ENCODE measurements at regions of chr3 and their contacts with region 1.

Region 1: DNA sequence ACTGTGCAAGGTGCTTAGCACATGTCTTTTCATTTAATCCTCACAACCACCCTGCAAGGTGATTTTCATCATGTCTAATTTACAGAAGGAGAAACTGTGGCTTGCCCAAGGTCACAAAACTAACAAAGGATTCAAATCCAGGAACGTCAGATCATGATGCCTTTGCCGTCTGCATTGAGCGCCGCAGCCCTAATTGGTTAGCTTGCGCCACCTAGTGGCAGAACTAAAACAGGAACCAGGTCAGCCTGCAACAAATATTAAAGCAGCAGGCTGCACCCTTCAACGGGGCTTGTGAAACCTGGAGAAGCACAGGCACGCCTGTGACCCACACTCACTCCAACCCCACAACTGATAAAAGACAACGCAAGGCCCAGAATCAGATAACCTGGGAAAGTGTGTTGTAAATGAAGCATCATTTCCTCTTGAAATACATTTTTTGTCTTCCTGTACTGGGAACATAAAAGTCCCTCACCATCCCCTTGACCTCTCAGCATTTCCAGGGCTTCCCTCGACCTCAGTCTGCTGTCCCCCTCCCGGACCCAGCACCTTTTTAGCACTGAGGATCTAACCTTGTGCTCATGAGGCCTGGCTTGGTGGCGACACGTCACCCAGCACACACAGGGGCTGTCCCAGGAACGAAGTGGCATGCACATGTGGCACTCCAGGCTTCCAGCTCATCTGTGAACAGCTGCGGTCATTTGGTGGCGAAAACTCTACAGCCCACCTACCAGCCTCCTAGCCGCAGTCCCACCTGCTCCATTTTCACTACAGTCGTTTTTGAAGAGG is 17.3 kb downstream of the DPH3 start:
- DNase-seq: peak; percentile 82
- H3K4me3 ChIP-seq: no peak overlapping the region
- H3K27ac ChIP-seq: no peak overlapping the region
- H3K4me1 ChIP-seq: peaks cover 0 to 8% (median 0%) of the 10 kb centered on the region in 4 donors
- H3K27me3 ChIP-seq: no peaks in the 10 kb centered on the region
- CTCF ChIP-seq: peak; percentile 83 to 97 (median 94)
- EP300 ChIP-seq: no peak
- POLR2A ChIP-seq: no peak

Region 2: DNA sequence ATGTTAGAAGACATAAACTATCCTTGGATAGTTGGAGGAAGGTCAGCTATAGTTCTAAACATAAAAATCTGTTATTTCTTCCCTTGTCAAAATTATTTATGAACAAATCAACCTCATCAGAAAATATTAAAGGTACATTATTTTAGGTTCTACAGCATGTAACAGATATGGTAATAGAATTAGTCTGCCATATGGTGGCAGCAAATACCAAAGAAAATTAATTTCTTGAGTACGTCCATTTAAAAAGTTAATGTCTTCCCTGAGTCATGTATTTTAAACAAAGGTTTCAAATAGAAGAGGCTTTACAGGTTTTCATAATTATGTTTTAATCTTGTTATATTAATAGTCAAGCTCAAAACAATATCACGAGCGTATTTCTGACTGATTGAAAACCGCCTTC is 431.8 kb before region 1 on chr3:
- in situ Hi-C with region 1: loop called in 3 of 4 experiments (anchors 10 to 25 kb)
- intact Hi-C with region 1: loop called (anchors 2 kb)
- DNase-seq: no peak
- H3K4me3 ChIP-seq: no peak overlapping the region
- H3K27ac ChIP-seq: no peak overlapping the region
- H3K4me1 ChIP-seq: peaks cover 0 to 24% (median 8%) of the 10 kb centered on the region in 4 donors
- H3K27me3 ChIP-seq: no peaks in the 10 kb centered on the region
- CTCF ChIP-seq: peak in 4 of 5 experiments; percentile 18 to 27 (median 22)
- EP300 ChIP-seq: no peak
- POLR2A ChIP-seq: no peak

Region 3: GRCh38 chr3:15820911-15821310 is 426.6 kb before region 1 on chr3:
- in situ Hi-C with region 1: loop called in 3 of 4 experiments (anchors 10 to 25 kb)
- intact Hi-C with region 1: no loop called
- DNase-seq: no peak
- H3K4me3 ChIP-seq: no peak overlapping the region
- H3K27ac ChIP-seq: no peak overlapping the region
- H3K4me1 ChIP-seq: peaks cover 0 to 8% (median 0%) of the 10 kb centered on the region in 4 donors
- H3K27me3 ChIP-seq: no peaks in the 10 kb centered on the region
- CTCF ChIP-seq: no peak
- EP300 ChIP-seq: no peak
- POLR2A ChIP-seq: no peak

Region 4: DNA sequence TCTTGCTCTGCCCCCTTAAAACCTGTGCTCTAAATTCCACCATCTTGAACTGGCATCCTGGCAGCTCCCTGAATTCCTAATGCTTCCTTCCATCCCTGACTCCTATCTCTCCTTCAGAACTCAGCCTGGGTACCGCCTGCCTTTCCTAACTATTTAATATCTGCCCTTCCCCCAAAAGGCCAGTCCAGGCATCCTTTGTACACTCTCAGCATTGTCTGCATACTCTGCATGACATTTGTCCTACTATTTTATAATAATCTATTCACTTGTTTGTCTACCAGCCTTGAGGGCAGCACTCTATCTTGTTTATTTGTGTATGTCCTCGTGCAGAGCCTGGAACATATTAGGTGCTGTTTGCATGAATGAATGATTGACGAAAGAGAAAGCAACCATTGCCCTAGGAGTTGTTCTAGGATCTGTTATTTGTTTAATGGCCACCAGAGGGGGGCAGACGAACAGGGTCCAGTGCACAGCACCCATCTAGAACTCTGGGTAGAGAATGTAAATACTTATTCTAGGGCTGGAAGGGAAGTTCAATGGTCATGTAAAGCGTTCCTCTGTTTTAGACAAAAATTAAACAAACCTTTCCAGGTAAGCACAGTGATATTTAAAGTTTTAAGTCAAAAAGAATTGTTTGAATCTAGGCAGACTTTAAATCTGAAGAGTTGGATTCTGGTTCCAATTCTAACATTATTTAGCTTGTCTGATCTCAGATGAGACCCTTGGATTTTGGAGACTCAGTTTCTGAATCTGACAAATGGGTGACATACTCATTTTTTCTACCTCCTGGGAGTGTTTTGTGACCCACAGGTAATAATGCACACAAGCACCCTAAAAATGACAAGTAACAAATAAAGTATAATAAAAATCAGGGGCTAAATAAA is 198.8 kb before region 1 on chr3:
- in situ Hi-C with region 1: loop called in 3 of 4 experiments (anchors 10 kb)
- intact Hi-C with region 1: loop called (anchors 5 kb)
- DNase-seq: peak; percentile 50
- H3K4me3 ChIP-seq: peak overlapping the region in 1 of 4 donors; percentile 25
- H3K27ac ChIP-seq: no peak overlapping the region
- H3K4me1 ChIP-seq: no peaks in the 10 kb centered on the region
- H3K27me3 ChIP-seq: no peaks in the 10 kb centered on the region
- CTCF ChIP-seq: peak; percentile 74 to 88 (median 81)
- EP300 ChIP-seq: no peak
- POLR2A ChIP-seq: no peak

Region 5: GRCh38 chr3:16060358-16060852 is 187.1 kb before region 1 on chr3:
- in situ Hi-C with region 1: loop called in 1 of 4 experiments (anchors 10 kb)
- intact Hi-C with region 1: no loop called
- DNase-seq: peak; percentile 30
- H3K4me3 ChIP-seq: no peak overlapping the region
- H3K27ac ChIP-seq: peak overlapping the region; percentile 54 to 76 (median 65)
- H3K4me1 ChIP-seq: peaks cover 0 to 12% (median 6%) of the 10 kb centered on the region in 4 donors
- H3K27me3 ChIP-seq: no peaks in the 10 kb centered on the region
- CTCF ChIP-seq: no peak
- EP300 ChIP-seq: peak; percentile 70
- POLR2A ChIP-seq: no peak

Region 6: DNA sequence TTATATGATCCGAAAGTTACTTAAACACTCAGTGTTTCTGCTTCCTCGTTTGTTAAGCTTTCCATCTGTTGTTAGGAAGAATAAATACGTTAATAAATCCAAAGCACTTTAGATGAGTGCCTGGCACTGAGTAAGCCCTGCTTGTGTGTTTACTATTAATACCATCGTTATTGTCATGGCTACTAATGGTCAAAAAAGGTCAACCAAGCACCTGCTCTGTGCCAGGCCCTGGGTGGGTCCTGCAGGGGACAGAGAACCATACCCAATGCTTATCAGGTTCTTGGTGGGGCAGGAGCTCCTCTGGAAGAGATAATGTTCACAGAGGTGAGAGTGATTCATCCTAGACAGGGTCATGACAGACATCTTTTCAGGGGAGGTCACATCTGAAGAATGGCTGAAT is 33.1 kb before region 1 on chr3:
- in situ Hi-C with region 1: no loop called
- intact Hi-C with region 1: loop called (anchors 1 kb)
- DNase-seq: no peak
- H3K4me3 ChIP-seq: no peak overlapping the region
- H3K27ac ChIP-seq: no peak overlapping the region
- H3K4me1 ChIP-seq: no peaks in the 10 kb centered on the region
- H3K27me3 ChIP-seq: no peaks in the 10 kb centered on the region
- CTCF ChIP-seq: no peak
- EP300 ChIP-seq: no peak
- POLR2A ChIP-seq: no peak

Region 7: GRCh38 chr3:16388850-16389441 is 141.5 kb after region 1 on chr3:
- in situ Hi-C with region 1: no loop called
- intact Hi-C with region 1: no loop called
- DNase-seq: no peak
- H3K4me3 ChIP-seq: no peak overlapping the region
- H3K27ac ChIP-seq: peak overlapping the region; percentile 7 to 25 (median 9)
- H3K4me1 ChIP-seq: no peaks in the 10 kb centered on the region
- H3K27me3 ChIP-seq: no peaks in the 10 kb centered on the region
- CTCF ChIP-seq: no peak
- EP300 ChIP-seq: no peak
- POLR2A ChIP-seq: no peak

Region 8: GRCh38 chr3:16504242-16504641 is 256.8 kb after region 1 on chr3:
- in situ Hi-C with region 1: no loop called
- intact Hi-C with region 1: no loop called
- DNase-seq: no peak
- H3K4me3 ChIP-seq: no peak overlapping the region
- H3K27ac ChIP-seq: no peak overlapping the region
- H3K4me1 ChIP-seq: peaks cover 0 to 12% (median 0%) of the 10 kb centered on the region in 4 donors
- H3K27me3 ChIP-seq: no peaks in the 10 kb centered on the region
- CTCF ChIP-seq: no peak
- EP300 ChIP-seq: no peak
- POLR2A ChIP-seq: no peak

Measured in transverse colon (tissue), 4 donors.